ENCODE measurements at regions of chr1 and their contacts with region 1.

Region 1: DNA sequence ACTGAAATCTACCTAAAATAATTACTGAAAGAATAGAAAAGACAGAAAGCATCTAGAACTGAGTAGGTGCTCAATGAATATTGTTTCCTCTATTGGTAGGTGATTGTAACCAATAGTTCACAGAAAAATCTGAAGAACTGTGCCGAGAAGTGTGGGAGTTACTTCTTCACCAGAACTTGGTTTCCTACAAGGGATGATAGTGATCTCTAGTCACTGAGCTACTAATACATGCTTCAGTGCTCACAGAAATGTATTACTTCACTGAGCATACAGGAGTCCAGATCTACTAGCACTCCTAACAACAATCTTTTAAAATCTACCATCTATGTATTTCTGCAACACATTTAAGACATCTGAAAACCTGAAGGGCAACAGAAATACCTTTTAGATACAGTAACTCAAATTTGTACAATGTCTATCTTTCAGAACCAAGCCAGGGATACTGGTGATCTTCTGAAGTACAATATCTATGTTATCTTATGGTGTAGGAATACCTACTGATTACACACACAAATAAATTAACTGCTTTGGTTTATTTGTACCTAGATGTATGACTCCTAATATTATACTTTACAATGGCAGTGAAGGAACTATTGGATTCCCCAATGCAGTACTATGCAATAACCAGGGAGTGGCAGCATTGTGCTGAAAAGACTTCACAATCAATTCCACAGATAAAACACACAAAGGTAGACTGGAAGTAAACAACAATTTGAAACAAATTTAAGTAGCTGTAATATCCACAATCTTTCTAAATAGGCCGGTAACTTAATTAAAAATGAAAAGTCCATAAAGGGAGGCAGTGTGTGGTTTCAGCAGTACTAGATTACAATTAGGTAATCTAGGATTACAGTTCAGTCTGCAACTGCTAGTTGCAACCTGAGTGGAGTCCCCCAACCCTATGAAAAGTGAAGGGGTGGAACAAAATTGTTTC is 243.0 kb downstream of the SLC45A1 start:
- DNase-seq: peak; percentile 58 to 73 (median 71)
- H3K4me3 ChIP-seq: no peak overlapping the region
- H3K27ac ChIP-seq: peak overlapping the region in 1 of 2 experiments; percentile 32
- H3K4me1 ChIP-seq: peaks cover 4 to 24% (median 7%) of the 10 kb centered on the region in 4 experiments
- H3K27me3 ChIP-seq: no peaks in the 10 kb centered on the region

Region 2: DNA sequence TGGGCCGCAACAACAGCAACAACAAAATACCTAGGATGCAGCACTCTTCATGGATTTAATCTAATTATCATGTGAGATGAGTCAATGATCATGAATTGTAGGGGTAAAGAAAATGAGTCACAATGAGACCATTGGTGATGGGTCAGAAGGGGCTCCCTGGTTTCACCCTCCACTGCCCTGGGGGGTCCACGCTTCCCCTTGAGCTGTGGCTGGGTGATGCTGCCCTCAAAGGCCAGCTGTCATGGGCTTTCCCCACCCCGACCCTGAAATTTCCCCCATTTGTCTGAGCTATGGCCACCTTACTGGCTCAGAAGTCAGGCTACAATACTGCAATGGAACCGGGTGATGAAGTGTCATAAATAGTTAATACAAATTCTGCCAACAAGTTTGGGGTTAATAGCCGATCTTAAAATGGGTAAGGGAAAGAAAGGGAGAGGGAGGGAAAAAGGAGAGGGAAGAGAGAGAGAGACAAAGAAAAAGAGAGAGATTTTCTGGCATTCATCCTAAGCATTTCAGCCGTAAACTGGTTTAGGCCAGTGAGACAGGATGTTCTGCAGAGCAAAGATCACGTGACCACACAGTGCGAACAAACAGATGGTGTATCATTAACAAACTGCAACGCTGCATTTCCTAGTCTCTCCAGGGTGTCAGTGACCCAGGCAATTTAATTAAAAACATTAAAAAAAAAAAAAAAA is 391.4 kb before region 1 on chr1:
- CTCF ChIA-PET with region 1: no interaction called
- POLR2A ChIA-PET with region 1: no interaction called
- DNase-seq: peak; percentile 39 to 89 (median 84)
- H3K4me3 ChIP-seq: no peak overlapping the region
- H3K27ac ChIP-seq: no peak overlapping the region
- H3K4me1 ChIP-seq: peaks cover 0 to 9% (median 4%) of the 10 kb centered on the region in 4 experiments
- H3K27me3 ChIP-seq: no peaks in the 10 kb centered on the region

Region 3: DNA sequence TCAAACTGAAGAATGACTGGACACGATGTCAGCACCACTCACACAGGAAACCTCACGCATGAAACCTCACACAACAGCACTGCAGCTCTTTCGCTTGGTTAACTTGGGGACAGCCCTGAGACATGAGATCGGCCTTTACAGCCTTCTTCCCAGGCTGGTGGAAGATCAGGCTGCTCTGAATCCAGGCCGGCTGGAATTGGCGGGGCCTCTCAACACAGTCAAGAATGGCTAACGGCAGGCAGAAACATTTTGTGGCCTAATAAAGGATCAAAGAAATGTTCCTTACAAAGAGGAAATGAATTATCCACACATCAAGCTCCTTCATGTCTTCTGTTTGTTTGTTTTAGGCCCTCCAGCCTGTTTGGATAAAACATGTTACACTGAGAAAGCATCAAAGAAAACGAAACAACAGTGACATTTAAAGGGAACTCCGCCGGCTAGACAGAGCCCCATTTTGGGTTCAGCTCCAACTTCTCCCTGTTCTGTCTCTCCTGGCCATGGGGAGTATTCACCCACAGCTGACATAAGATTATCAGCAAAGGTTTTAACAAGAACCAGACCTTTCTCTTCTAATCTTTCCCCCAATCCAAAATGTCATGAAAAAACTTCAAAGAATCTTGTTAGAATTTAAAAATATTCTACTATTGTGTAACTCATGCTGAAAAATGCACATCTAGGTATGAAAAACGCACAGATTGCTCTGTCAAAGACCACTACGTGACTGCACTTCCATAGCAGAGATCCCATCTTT is 111.8 kb before region 1 on chr1:
- CTCF ChIA-PET with region 1: no interaction called
- POLR2A ChIA-PET with region 1: no interaction called
- DNase-seq: peak in 1 of 3 donors; percentile 45
- H3K4me3 ChIP-seq: no peak overlapping the region
- H3K27ac ChIP-seq: peak overlapping the region in 1 of 2 experiments; percentile 43
- H3K4me1 ChIP-seq: peaks cover 3 to 5% (median 5%) of the 10 kb centered on the region in 4 experiments
- H3K27me3 ChIP-seq: no peaks in the 10 kb centered on the region

Region 4: GRCh38 chr1:8571200-8571984 is 10.5 kb after region 1 on chr1:
- CTCF ChIA-PET with region 1: interaction called, 27 read pairs
- POLR2A ChIA-PET with region 1: no interaction called
- DNase-seq: peak; percentile 55 to 75 (median 68)
- H3K4me3 ChIP-seq: peak overlapping the region in 1 of 7 experiments; percentile 30
- H3K27ac ChIP-seq: peak overlapping the region; percentile 30 to 70
- H3K4me1 ChIP-seq: peaks cover 0 to 18% (median 9%) of the 10 kb centered on the region in 4 experiments
- H3K27me3 ChIP-seq: no peaks in the 10 kb centered on the region

Region 5: GRCh38 chr1:8584316-8584715 is 23.4 kb after region 1 on chr1:
- CTCF ChIA-PET with region 1: interaction called, 12 read pairs
- POLR2A ChIA-PET with region 1: no interaction called
- DNase-seq: no peak
- H3K4me3 ChIP-seq: no peak overlapping the region
- H3K27ac ChIP-seq: no peak overlapping the region
- H3K4me1 ChIP-seq: peaks cover 0 to 5% (median 2%) of the 10 kb centered on the region in 4 experiments
- H3K27me3 ChIP-seq: no peaks in the 10 kb centered on the region

Region 6: GRCh38 chr1:8671306-8671917 is 110.5 kb after region 1 on chr1:
- CTCF ChIA-PET with region 1: interaction called, 43 read pairs
- POLR2A ChIA-PET with region 1: no interaction called
- DNase-seq: peak; percentile 78 to 82 (median 81)
- H3K4me3 ChIP-seq: no peak overlapping the region
- H3K27ac ChIP-seq: peak overlapping the region in 1 of 2 experiments; percentile 7
- H3K4me1 ChIP-seq: peaks cover 13 to 66% (median 35%) of the 10 kb centered on the region in 4 experiments
- H3K27me3 ChIP-seq: no peaks in the 10 kb centered on the region

Region 7: DNA sequence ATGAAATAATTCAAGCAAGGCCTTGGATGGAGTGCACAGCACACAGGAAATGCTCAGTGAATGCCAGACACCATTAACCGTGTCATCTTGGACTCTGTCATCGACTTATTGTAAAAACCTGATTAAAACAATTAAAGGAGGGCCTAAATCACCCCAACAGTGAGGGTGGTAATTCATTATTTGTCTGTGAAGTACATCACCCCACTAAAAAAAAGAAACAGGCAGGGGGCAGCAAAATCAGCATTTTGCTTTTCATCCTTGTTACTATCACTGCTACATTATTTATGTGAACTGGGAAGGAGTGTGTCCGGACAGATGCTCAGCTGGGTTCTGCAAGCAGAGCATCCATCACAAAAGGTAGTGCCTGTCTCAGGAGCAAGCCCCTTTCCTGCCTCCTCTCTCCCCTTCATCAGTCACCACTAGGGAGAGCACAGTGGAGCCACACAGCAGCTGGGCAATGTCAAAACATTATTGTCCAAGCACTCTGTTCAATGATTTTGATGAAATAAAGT is 158.0 kb after region 1 on chr1:
- CTCF ChIA-PET with region 1: interaction called, 145 read pairs
- POLR2A ChIA-PET with region 1: no interaction called
- DNase-seq: no peak
- H3K4me3 ChIP-seq: no peak overlapping the region
- H3K27ac ChIP-seq: no peak overlapping the region
- H3K4me1 ChIP-seq: peaks cover 14 to 74% (median 23%) of the 10 kb centered on the region in 4 experiments
- H3K27me3 ChIP-seq: no peaks in the 10 kb centered on the region

Region 8: DNA sequence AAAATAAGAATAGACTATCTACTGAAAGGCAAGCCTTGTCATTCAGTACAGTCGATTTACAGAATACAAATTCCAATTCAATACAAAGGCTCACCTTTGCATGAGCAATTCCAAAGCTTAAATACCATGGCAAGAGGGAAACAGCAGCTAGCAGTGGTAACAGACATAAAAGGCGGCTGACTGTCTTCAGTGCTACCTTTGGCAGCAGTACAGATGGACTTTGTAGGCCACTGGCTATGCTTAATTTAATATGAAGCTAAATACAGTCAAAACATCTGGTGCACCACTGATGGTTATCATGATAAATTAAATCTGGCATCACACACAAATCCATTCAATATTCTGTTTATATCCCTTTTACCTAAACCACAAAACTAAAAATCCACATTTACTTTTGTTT is 194.1 kb after region 1 on chr1:
- CTCF ChIA-PET with region 1: no interaction called
- POLR2A ChIA-PET with region 1: no interaction called
- DNase-seq: peak in 2 of 3 donors; percentile 18 to 33
- H3K4me3 ChIP-seq: no peak overlapping the region
- H3K27ac ChIP-seq: no peak overlapping the region
- H3K4me1 ChIP-seq: peaks cover 3 to 16% (median 6%) of the 10 kb centered on the region in 4 experiments
- H3K27me3 ChIP-seq: no peaks in the 10 kb centered on the region